PC-9 (cell line): ENCODE measurements at regions of chr7 and their contacts with region 1.

Region 1: DNA sequence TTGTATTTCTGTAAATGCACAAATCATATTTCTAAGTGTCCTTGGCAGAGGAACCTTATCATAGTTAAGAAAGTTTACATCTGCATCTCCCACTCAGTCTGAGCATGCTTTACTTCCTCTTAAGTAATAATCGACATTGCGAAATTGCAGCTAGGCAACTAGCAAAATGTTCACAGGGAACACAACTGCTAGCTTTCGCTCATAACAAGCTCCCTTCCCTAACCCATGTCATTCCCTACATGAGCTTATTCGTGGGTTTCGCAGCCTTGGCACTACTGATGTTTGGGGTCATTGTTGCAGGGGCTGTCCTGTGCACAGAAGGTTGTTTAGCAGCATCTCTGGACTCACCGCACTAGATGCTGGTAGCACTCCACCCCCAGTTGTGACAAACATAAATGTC is 71.6 kb downstream of the AHR start:
- DNase-seq: peak; percentile 56 to 76
- H3K4me3 ChIP-seq: no peak overlapping the region
- H3K27ac ChIP-seq: peak overlapping the region; percentile 94
- H3K4me1 ChIP-seq: peaks cover 51% of the 10 kb centered on the region
- H3K27me3 ChIP-seq: no peaks in the 10 kb centered on the region
- CTCF ChIP-seq: no peak

Region 2: DNA sequence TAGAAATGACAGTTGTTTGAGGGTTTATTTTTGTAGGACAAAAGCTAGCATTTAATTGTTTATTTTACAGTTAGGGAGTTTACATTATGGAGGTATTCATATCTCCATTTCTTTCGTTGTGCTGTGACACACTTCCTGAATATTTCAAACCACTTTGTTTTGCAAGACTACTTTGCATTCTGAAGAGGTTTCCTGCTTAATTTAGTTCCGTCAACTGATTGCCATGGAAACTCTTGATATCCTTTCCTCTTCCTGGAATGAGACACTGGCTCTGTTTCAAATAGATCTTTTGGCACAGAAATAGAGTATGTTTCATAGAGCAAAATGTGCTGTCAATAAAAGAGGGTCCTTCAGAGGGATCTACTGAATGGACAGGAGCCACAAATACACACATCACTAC is 328.8 kb before region 1 on chr7:
- CTCF ChIA-PET with region 1: no interaction called
- POLR2A ChIA-PET with region 1: no interaction called
- intact Hi-C with region 1: loop called (anchors 1 kb)
- DNase-seq: peak in 1 of 2 experiments; percentile 97
- H3K4me3 ChIP-seq: peak overlapping the region; percentile 11; the same call in 1 of the 2 replicates
- H3K27ac ChIP-seq: peak overlapping the region; percentile 97
- H3K4me1 ChIP-seq: peaks cover 83% of the 10 kb centered on the region
- H3K27me3 ChIP-seq: no peaks in the 10 kb centered on the region
- CTCF ChIP-seq: no peak

Region 3: GRCh38 chr7:17234398-17235031 is 135.6 kb before region 1 on chr7:
- CTCF ChIA-PET with region 1: no interaction called
- POLR2A ChIA-PET with region 1: no interaction called
- intact Hi-C with region 1: loop called (anchors 1 kb)
- DNase-seq: peak; percentile 56 to 97
- H3K4me3 ChIP-seq: peak overlapping the region; percentile 21; the same call in 1 of the 2 replicates
- H3K27ac ChIP-seq: peak overlapping the region; percentile 67
- H3K4me1 ChIP-seq: peaks cover 32% of the 10 kb centered on the region
- H3K27me3 ChIP-seq: no peaks in the 10 kb centered on the region
- CTCF ChIP-seq: no peak

Region 4: DNA sequence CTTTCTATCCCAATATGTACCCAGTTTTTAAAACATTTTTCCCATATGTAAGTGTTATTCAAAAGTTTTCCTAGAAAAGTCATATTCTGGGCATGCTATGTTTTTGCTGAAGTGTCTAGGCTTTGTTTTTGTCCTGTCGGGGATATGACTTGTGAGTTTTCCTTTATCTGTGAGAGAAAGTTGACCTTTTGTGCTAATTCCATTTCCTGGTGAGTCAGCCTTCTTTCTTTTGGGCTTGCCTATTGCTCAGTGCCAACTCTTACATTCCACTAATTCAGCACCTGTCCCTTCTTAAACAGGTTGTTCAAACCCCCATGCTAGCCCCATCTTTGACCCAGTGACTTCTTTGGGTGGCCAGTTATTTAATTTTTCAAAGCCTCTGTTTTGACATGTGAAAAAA is 74.6 kb after region 1 on chr7:
- CTCF ChIA-PET with region 1: no interaction called
- POLR2A ChIA-PET with region 1: no interaction called
- intact Hi-C with region 1: loop called (anchors 5 kb)
- DNase-seq: peak; percentile 34 to 81
- H3K4me3 ChIP-seq: no peak overlapping the region
- H3K27ac ChIP-seq: peak overlapping the region; percentile 51
- H3K4me1 ChIP-seq: peaks cover 30% of the 10 kb centered on the region
- H3K27me3 ChIP-seq: no peaks in the 10 kb centered on the region
- CTCF ChIP-seq: no peak

Region 5: DNA sequence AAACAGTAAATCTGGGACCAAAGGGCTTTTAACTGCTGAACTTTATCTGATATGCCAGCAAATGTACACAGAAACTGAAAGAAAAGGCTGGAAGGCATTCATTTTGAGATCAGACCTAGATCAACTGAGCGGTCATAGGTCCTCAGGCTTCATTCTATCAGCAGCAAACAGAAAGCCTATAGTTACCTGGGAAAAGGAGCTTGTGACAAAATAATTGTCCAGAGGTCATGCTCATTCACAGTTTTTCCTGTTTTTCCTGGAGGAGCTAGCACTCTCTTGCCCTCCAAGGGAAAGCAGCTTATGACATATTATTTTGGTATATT is 248.5 kb after region 1 on chr7:
- CTCF ChIA-PET with region 1: no interaction called
- POLR2A ChIA-PET with region 1: no interaction called
- intact Hi-C with region 1: loop called (anchors 2 kb)
- DNase-seq: peak; percentile 29 to 94
- H3K4me3 ChIP-seq: peak overlapping the region; percentile 12; the same call in 1 of the 2 replicates
- H3K27ac ChIP-seq: peak overlapping the region; percentile 51
- H3K4me1 ChIP-seq: peaks cover 34% of the 10 kb centered on the region
- H3K27me3 ChIP-seq: no peaks in the 10 kb centered on the region
- CTCF ChIP-seq: no peak